ENCODE measurements at regions of chr2 and their contacts with region 1.

Region 1: DNA sequence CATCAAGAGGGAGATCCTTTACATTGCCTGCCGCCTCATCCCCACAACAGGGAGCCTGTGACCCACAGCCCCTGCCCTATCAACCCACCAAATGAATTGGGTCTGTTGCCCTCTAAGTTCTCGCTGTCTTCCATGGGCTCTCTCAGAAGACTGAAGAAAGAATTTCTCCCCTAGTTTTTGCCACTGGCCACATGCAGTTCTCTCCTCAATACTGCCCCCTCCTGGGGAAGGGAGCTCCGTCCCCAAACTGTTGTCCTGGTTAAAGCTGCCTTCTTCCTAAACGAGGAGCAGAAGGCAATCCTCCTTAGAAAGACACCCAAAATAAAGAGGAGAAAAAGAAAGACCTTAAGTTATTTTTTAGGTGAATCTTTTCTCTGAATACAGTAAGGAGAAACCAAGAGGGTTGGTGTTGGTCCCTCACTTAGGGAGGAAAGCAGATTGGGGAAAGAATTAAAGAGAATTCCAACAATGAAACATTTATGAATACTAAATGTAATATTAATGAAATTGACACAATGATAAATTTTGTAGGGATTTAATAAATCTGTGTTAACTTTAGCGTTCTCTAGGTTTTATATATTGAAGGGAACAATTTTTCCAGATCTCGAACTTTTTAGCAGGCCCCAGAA is 31.1 kb upstream of the SATB2 start:
- DNase-seq: peak in 2 of 3 donors; percentile 19 to 29
- H3K4me3 ChIP-seq: no peak overlapping the region
- H3K4me3 Mint-ChIP-seq: no peak overlapping the region
- H3K27ac ChIP-seq: no peak overlapping the region
- H3K27ac Mint-ChIP-seq: no peak overlapping the region
- H3K4me1 ChIP-seq: no peaks in the 10 kb centered on the region
- H3K4me1 Mint-ChIP-seq: no peaks in the 10 kb centered on the region
- H3K27me3 ChIP-seq: peaks cover 0 to 4% of the 10 kb centered on the region in 2 donors
- H3K27me3 Mint-ChIP-seq: peaks cover 5 to 17% (median 11%) of the 10 kb centered on the region in 3 donors
- CTCF ChIP-seq: peak; percentile 87

Region 2: GRCh38 chr2:198309673-198310280 is 1179.1 kb before region 1 on chr2:
- intact Hi-C with region 1: loop called in 1 of 2 experiments (anchors 5 kb)
- DNase-seq: peak; percentile 9 to 36 (median 27)
- H3K4me3 ChIP-seq: no peak overlapping the region
- H3K4me3 Mint-ChIP-seq: no peak overlapping the region
- H3K27ac ChIP-seq: no peak overlapping the region
- H3K27ac Mint-ChIP-seq: no peak overlapping the region
- H3K4me1 ChIP-seq: no peaks in the 10 kb centered on the region
- H3K4me1 Mint-ChIP-seq: no peaks in the 10 kb centered on the region
- H3K27me3 ChIP-seq: peaks cover 8 to 13% of the 10 kb centered on the region in 2 donors
- H3K27me3 Mint-ChIP-seq: peaks cover 17 to 18% (median 18%) of the 10 kb centered on the region in 3 donors
- CTCF ChIP-seq: peak; percentile 93

Measured in CD14-positive monocyte (primary cell).